CD4-positive, alpha-beta T cell (primary cell): ENCODE measurements at regions of chr5 and their contacts with region 1.

Region 1: GRCh38 chr5:171342362-171343111 is 33.5 kb downstream of the TLX3 start:
- DNase-seq: peak in 4 of 14 experiments; percentile 24 to 59 (median 45)
- ATAC-seq: no peak
- H3K4me3 ChIP-seq: no peak overlapping the region
- H3K4me3 Mint-ChIP-seq: no peak overlapping the region
- H3K27ac ChIP-seq: no peak overlapping the region
- H3K27ac Mint-ChIP-seq: no peak overlapping the region
- H3K4me1 ChIP-seq: no peaks in the 10 kb centered on the region
- H3K4me1 Mint-ChIP-seq: no peaks in the 10 kb centered on the region
- H3K27me3 ChIP-seq: peaks cover 0 to 15% of the 10 kb centered on the region in 2 experiments
- H3K27me3 Mint-ChIP-seq: peaks cover 27% of the 10 kb centered on the region
- CTCF ChIP-seq: peak; percentile 31

Region 2: DNA sequence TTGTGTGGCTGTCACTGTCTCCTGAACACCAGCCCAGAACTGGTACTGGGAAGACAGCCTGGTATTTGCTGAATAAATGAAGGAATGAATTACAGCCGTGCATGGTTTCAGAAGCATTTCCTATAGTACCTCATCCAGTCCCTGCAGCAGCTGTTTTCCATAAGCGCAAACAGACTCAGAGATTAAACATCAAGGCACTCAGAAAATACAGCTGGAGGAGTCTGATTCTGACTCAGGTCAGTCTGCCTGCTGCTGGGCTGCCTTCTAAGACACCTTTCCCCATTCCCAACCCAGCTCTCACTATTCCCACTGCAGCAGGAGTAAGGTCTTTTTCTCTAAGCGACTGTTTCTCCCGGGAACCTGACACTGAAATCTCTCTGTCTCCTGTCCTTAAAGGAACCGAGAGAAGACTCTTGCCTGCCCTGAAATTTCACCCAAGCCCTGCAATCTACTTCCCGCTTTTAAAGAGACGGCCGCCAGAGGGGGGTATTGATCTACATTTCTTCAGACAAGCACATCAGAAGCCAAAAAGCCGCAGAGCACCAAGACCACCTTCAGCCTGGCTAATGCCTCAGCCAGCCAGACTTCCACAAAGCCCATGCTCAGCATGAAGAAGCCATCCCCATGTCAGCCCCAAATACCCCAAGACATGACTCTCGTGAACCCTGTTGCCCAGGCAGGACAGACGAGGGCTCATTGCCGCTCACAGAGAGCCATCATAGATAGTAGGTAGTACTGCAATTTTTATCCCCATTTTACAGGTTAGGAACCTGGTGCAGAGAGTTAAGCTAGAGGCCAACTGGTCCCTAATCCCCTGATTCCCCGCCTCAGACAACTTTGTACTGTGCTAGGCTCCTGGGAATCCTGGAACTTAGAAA is 1242.2 kb before region 1 on chr5:
- CTCF ChIA-PET with region 1: no interaction called
- POLR2A ChIA-PET with region 1: no interaction called
- intact Hi-C with region 1: loop called in 1 of 2 experiments (anchors 10 kb)
- DNase-seq: peak; percentile 48 to 79 (median 60)
- ATAC-seq: peak; percentile 56
- H3K4me3 ChIP-seq: no peak overlapping the region
- H3K4me3 Mint-ChIP-seq: no peak overlapping the region
- H3K27ac ChIP-seq: no peak overlapping the region
- H3K27ac Mint-ChIP-seq: no peak overlapping the region
- H3K4me1 ChIP-seq: peaks cover 2% of the 10 kb centered on the region
- H3K4me1 Mint-ChIP-seq: no peaks in the 10 kb centered on the region
- H3K27me3 ChIP-seq: no peaks in the 10 kb centered on the region
- H3K27me3 Mint-ChIP-seq: peaks cover 20% of the 10 kb centered on the region
- CTCF ChIP-seq: peak; percentile 67

Region 3: DNA sequence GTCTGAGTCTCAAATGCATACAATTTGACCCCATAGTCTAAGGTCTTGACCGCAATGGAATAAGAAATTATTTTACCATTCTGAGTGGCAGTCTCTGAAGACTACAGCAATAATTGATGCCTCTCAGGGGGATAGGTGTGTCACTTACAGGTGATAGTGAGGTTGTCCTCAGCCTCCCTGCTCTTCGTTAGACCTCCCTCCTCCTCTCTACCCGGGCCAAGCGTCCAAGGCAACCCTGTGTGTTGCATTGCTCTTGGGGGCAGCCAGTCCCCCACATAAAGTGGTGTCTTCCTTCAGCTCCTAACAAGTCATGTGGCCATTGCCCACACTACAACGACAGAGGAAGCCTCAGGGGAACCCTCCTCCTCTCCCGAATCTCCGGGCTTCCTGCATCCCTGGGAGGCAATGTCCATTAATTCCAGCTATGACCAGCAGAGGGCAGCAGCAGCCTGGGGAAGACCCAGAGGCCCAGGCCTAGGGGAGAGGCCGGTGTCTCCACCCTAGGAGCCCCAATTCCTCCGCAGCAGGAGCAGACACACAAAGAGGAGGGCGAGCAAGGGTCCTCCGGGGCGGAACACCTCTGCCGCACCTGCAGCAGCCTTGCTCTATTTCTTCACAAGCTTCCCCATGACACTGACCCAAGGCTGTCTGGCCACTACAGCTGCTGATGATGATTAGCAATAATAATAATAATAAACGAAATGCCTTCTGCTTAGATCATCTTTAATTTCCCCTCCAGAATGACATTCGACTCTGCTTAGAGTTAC is 703.9 kb before region 1 on chr5:
- CTCF ChIA-PET with region 1: no interaction called
- POLR2A ChIA-PET with region 1: no interaction called
- intact Hi-C with region 1: loop called in 1 of 2 experiments (anchors 5 kb)
- DNase-seq: peak; percentile 37 to 68 (median 46)
- ATAC-seq: no peak
- H3K4me3 ChIP-seq: no peak overlapping the region
- H3K4me3 Mint-ChIP-seq: no peak overlapping the region
- H3K27ac ChIP-seq: no peak overlapping the region
- H3K27ac Mint-ChIP-seq: no peak overlapping the region
- H3K4me1 ChIP-seq: peaks cover 9% of the 10 kb centered on the region
- H3K4me1 Mint-ChIP-seq: peaks cover 10% of the 10 kb centered on the region
- H3K27me3 ChIP-seq: peaks cover 6 to 15% of the 10 kb centered on the region in 2 experiments
- H3K27me3 Mint-ChIP-seq: peaks cover 43% of the 10 kb centered on the region
- CTCF ChIP-seq: peak; percentile 73

Region 4: DNA sequence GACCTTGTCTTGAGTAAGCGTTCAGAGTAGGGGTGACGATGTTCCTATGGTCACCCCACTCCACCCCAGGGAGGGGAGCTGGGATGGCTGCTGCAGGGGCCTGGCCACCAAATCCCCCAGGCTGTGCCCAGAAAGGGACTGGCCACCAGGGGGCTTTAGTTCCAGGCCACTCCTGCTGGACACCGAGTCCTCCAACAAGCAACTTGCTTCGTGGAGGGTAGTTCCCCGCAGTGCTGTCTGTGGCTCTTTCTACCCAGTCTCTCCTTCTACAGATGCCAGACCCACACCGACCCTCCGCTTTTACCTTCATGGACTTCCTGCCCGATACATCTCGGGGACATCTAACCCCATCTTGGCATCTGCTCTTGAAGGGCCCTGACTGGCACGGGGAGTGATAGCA is 594.7 kb before region 1 on chr5:
- CTCF ChIA-PET with region 1: no interaction called
- POLR2A ChIA-PET with region 1: no interaction called
- intact Hi-C with region 1: loop called in 1 of 2 experiments (anchors 10 kb)
- DNase-seq: no peak
- ATAC-seq: no peak
- H3K4me3 ChIP-seq: no peak overlapping the region
- H3K4me3 Mint-ChIP-seq: no peak overlapping the region
- H3K27ac ChIP-seq: no peak overlapping the region
- H3K27ac Mint-ChIP-seq: no peak overlapping the region
- H3K4me1 ChIP-seq: peaks cover 8% of the 10 kb centered on the region
- H3K4me1 Mint-ChIP-seq: no peaks in the 10 kb centered on the region
- H3K27me3 ChIP-seq: peaks cover 21 to 22% of the 10 kb centered on the region in 2 experiments
- H3K27me3 Mint-ChIP-seq: peaks cover 76% of the 10 kb centered on the region
- CTCF ChIP-seq: no peak

Region 5: DNA sequence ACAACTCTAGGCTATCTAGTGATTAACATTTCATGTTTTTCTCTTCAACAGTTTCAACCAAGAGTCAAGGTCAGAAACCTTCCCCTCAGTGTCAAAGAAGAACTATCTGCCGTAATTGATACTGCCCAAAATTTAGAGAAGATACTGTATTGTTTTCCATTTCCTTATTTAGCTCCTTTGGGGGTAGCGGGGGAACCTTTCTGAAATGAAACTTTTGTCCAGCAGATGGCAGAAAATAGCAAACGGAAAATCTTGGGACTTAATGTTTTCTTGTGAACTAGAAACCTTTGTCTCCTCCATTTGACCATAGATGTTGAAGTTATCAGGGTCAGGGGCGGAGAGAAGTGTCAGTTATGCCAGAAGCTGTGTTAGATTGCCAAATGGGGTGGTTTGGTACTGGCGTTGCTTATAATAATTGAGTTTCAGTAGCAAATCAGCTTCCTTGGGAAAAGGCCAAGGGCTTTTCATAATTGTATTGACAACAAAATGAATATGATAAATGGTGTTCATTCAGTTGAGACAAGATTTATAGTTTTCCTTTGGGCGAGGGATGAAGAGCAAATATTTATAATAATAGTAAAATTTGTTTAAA is 135.2 kb before region 1 on chr5:
- CTCF ChIA-PET with region 1: no interaction called
- POLR2A ChIA-PET with region 1: no interaction called
- intact Hi-C with region 1: loop called (anchors 5 to 10 kb)
- DNase-seq: peak in 3 of 14 experiments; percentile 36 to 40 (median 38)
- ATAC-seq: no peak
- H3K4me3 ChIP-seq: no peak overlapping the region
- H3K4me3 Mint-ChIP-seq: no peak overlapping the region
- H3K27ac ChIP-seq: no peak overlapping the region
- H3K27ac Mint-ChIP-seq: no peak overlapping the region
- H3K4me1 ChIP-seq: no peaks in the 10 kb centered on the region
- H3K4me1 Mint-ChIP-seq: no peaks in the 10 kb centered on the region
- H3K27me3 ChIP-seq: no peaks in the 10 kb centered on the region
- H3K27me3 Mint-ChIP-seq: peaks cover 12% of the 10 kb centered on the region
- CTCF ChIP-seq: peak; percentile 39

Region 6: DNA sequence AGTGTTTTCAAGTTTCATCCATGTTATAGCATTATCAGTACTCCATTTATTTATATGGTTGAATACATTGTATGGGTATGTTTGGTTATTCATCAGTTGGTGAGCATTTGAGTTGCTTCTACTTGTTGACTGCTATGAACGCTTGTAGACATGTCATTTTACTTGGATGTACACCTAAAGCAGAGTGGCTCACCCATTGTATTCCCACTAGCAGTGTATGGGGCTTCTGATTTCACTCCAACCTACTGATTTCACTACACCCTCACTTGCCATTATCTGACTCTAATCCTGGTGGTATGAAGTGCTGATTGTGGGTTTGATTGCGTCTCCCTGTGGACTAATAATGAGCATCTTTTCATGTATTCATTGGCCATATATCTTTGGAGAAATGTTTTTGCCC is 54.7 kb after region 1 on chr5:
- CTCF ChIA-PET with region 1: no interaction called
- POLR2A ChIA-PET with region 1: no interaction called
- intact Hi-C with region 1: no loop called
- DNase-seq: no peak
- ATAC-seq: no peak
- H3K4me3 ChIP-seq: no peak overlapping the region
- H3K4me3 Mint-ChIP-seq: no peak overlapping the region
- H3K27ac ChIP-seq: no peak overlapping the region
- H3K27ac Mint-ChIP-seq: no peak overlapping the region
- H3K4me1 ChIP-seq: peaks cover 22% of the 10 kb centered on the region
- H3K4me1 Mint-ChIP-seq: peaks cover 57% of the 10 kb centered on the region
- H3K27me3 ChIP-seq: no peaks in the 10 kb centered on the region
- H3K27me3 Mint-ChIP-seq: no peaks in the 10 kb centered on the region
- CTCF ChIP-seq: no peak